Activated CD4-positive, alpha-beta T cell treated with anti-CD3 and anti-CD28 coated beads for 36 hours (primary cell): ENCODE measurements at regions of chr2 and their contacts with region 1.

Region 1: DNA sequence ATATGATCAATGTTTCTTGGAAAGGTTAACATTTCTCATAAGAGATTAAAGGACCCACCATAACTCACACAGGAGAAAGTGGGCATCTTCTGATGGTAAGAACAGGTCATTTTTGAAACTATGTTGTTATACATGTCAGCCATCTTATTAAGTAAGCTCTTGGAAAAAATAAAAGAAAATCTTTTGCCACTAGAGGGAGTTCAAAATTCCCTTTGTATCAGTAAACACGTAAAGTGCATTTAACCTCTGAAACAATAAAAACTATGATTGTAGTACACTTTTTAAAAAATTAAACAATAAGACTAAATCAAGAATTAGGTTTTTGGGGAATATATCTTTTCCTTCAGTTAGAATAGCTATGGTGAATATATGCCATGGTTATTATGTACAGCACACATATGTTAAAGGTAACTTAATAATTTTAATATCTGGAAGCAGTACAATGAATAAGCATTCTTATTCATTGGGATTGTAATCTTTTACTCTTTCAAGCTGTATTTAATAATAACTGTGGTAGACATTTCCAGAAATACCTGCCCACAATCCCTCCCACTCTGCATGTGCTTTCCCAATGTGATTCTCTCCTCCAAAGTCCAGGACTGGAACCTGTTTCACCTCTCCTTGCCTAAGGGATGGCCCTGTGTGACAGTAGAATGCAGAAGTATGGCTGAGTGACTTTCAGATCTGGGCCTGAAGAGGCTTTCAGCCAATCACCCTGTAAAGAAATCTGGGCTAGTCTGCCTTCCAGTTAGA is 64.2 kb downstream of the RBMS1 start:
- DNase-seq: no peak
- ATAC-seq: peak; percentile 24
- H3K4me3 Mint-ChIP-seq: no peak overlapping the region
- H3K27ac Mint-ChIP-seq: peak overlapping the region; percentile 69
- H3K4me1 Mint-ChIP-seq: peaks cover 61% of the 10 kb centered on the region
- H3K27me3 Mint-ChIP-seq: no peaks in the 10 kb centered on the region

Region 2: DNA sequence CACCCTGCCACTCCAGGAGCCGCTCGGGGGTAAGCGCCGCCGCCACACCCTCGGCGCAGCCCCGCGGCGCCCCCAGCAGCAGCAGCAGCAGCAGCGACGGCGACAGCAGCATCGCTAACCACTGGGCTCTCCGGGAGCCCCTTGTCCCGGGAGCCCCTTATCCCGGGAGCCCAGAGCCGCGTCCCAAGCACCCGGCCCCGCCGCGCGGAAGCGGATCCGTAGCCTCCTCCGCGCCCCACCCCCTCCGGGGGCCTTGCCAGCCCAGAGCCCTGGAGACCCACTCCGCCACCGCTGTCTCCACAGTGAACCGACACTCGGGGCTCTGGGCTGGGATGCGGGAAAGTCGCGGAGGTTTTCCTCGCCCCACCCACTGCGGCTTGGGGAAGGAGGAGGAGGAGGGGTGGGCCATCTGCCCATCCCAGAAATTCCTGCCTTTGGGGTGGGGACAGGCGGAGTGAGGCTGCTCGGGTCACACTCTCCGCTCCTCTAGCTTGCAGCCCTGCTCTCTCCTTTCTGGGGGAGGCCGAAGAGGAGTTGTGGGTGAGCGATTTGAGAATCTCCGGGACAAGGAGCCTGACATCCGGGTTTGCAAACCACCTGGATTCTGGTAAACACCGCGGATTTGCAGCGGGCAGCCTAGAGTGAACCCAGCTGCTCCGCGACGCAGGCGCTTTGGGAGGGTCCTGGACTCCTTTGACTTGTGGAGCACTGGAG is 367.0 kb before region 1 on chr2 and contains the start of gene PLA2R1:
- CTCF ChIA-PET with region 1: no interaction called
- POLR2A ChIA-PET with region 1: no interaction called
- intact Hi-C with region 1: no loop called
- DNase-seq: peak; percentile 34
- ATAC-seq: peak; percentile 58
- H3K4me3 Mint-ChIP-seq: peak within 1 kb of the TSS; percentile 59
- H3K27ac Mint-ChIP-seq: no peak within 1 kb of the TSS
- H3K4me1 Mint-ChIP-seq: no peaks in the 10 kb centered on the region
- H3K27me3 Mint-ChIP-seq: peaks cover 46% of the 10 kb centered on the region
- total RNA-seq, gene PLA2R1: 0.02 TPM in 1 of 2 experiments, not detected in the other

Region 3: GRCh38 chr2:160465406-160465805 is 36.0 kb after region 1 on chr2:
- CTCF ChIA-PET with region 1: interaction called, 6 read pairs
- POLR2A ChIA-PET with region 1: no interaction called
- intact Hi-C with region 1: loop called in 1 of 2 experiments (anchors 2 kb)
- DNase-seq: peak; percentile 62
- ATAC-seq: peak; percentile 89
- H3K4me3 Mint-ChIP-seq: peak overlapping the region; percentile 2
- H3K27ac Mint-ChIP-seq: peak overlapping the region; percentile 83
- H3K4me1 Mint-ChIP-seq: peaks cover 84% of the 10 kb centered on the region
- H3K27me3 Mint-ChIP-seq: no peaks in the 10 kb centered on the region

Region 4: DNA sequence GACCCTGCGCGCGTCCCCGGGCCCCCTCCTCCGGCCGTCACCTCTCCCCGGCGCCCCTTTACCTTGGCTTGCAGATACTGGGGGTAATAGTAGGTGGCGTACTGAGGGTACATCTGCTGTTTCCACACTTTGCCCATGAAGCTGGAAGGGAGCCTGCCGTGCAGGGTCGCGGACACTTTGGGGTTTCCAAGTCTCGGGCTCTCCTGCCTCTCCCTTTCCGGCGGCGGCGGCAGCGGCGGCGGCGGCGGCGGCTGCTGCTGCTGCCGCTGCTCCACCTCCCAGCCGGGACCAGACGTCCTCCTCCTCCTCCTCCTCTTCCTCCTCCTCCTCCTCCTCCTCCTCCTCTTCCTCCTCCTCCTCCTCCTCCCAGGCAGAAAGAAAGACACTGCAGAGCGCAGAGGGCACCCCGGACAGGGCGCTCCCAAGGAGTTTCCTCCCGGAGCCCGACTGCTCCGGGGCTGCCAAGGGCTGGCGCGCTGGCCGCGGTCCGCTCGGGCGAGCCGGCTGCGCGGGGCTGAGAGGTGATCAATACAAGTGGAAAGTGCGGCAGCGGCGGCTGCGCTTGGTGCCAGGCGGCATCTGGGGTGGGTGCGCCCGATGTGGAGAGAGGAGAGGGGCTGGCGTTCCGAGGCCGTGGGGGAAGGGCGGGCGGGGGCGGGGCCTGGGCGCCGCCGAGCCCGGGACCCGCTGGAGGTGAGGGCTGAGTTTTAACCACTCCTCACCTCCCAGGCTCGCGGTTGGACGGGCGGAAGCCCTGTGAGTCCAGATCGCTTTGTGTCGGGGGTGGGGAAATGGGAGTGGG is 64.0 kb after region 1 on chr2 and contains the start of gene RBMS1:
- CTCF ChIA-PET with region 1: interaction called, 4 read pairs
- POLR2A ChIA-PET with region 1: no interaction called
- intact Hi-C with region 1: loop called (anchors 2 kb)
- DNase-seq: peak; percentile 70
- ATAC-seq: peak; percentile 31
- H3K4me3 Mint-ChIP-seq: peak within 1 kb of the TSS; percentile 91
- H3K27ac Mint-ChIP-seq: peak within 1 kb of the TSS; percentile 65
- H3K4me1 Mint-ChIP-seq: peaks cover 48% of the 10 kb centered on the region
- H3K27me3 Mint-ChIP-seq: peaks cover 2% of the 10 kb centered on the region
- total RNA-seq, gene RBMS1: 39.3 to 47.7 TPM

Region 5: DNA sequence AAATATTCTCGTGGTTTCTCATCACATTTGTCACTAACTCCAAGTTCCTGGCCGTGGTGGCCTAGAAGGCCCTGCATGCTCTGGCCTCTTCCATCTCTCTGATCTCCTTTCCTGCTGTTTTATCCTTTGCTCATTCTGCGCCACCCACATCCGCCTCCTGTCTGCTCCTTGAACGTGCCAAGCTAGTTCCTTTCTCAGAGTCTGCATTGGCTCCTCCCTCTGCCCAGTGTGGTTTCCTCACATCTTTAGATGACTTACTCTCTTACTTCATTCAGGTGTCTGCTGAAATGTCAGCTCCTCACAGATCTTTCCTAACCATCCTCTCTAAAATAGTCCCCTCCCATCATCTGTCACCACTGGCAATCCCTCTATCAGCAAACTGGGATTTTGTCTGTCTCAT is 222.8 kb after region 1 on chr2:
- CTCF ChIA-PET with region 1: no interaction called
- POLR2A ChIA-PET with region 1: interaction called, 16 read pairs
- intact Hi-C with region 1: no loop called
- DNase-seq: peak; percentile 84
- ATAC-seq: peak; percentile 98
- H3K4me3 Mint-ChIP-seq: peak overlapping the region; percentile 10
- H3K27ac Mint-ChIP-seq: peak overlapping the region; percentile 59
- H3K4me1 Mint-ChIP-seq: peaks cover 29% of the 10 kb centered on the region
- H3K27me3 Mint-ChIP-seq: no peaks in the 10 kb centered on the region